ENCODE measurements at regions of chr16 and their contacts with region 1.

Region 1: DNA sequence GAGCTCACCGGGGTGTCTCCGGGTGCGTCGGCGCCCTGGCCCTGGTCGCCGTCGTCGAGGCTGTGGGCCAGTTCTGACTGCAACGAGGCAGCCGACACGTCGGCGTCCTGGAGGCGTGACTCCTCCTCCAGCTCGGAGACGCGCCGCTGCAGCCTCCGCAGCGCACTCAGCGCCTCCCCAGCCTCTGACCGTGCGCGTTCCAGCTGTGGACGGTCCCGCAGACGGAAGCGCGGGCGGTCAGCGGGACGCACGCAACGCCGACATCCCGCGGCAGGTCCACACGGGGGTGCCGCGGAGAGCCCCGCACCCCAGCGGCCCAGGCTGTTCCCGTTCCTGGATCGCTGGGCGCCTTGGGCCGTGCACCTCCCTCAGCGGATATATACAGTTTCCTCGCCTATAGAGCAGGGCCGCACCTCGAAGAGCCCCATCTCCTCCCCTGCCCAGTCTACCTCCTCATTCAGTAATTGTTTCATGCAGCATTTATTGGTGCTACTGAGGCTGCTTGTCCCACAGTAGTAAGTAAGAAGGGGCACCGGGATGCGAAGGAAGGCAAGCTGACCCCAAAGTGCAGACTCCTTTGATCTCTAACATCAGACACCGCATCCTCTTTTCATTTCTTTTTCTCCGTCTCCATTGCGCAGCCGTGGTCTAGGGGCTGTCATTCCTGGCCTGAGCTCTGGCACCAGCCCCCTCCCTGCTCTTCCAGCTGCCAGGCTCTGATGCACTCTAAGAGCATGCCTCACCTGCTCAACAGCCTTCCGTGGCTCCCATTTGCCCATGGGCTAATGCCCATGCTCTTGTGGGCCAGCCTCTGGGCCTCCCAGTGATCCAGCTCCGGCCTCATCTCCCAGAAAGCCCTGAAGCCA is 5.9 kb downstream of the THOC6 start:
- DNase-seq: peak; percentile 75
- H3K4me3 Mint-ChIP-seq: peak overlapping the region; percentile 69
- H3K27ac Mint-ChIP-seq: peak overlapping the region; percentile 67
- H3K4me1 Mint-ChIP-seq: peaks cover 46% of the 10 kb centered on the region
- H3K27me3 Mint-ChIP-seq: peaks cover 42% of the 10 kb centered on the region

Region 2: DNA sequence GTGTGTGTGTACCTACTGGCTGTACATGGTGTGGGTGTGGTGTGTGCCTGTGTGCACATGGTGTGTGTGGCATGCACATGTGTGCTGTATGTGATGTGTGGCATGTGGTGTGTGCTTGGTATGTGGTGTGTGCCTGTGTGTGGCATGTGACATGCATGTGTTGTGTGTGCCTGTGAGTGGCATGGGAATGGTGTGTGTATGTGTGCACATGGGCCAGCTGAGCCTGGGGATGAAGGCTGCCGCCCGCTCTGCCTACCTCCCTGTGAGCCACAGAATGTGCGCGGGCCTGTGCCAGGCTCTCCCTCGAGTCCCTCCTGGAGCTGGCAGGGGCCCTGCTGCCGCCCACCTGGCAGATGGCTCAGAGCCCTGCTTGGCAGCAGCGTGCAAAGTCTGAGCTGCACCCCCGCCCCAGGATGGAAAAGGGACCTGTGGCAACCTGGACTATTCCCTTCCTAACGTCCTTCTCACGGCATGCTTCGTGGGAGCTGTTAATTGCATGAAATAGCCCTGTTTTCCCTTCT is 319.0 kb before region 1 on chr16:
- CTCF ChIA-PET with region 1: no interaction called
- POLR2A ChIA-PET with region 1: no interaction called
- DNase-seq: no peak
- H3K4me3 Mint-ChIP-seq: no peak overlapping the region
- H3K27ac Mint-ChIP-seq: no peak overlapping the region
- H3K4me1 Mint-ChIP-seq: peaks cover 4% of the 10 kb centered on the region
- H3K27me3 Mint-ChIP-seq: peaks cover 5% of the 10 kb centered on the region

Region 3: DNA sequence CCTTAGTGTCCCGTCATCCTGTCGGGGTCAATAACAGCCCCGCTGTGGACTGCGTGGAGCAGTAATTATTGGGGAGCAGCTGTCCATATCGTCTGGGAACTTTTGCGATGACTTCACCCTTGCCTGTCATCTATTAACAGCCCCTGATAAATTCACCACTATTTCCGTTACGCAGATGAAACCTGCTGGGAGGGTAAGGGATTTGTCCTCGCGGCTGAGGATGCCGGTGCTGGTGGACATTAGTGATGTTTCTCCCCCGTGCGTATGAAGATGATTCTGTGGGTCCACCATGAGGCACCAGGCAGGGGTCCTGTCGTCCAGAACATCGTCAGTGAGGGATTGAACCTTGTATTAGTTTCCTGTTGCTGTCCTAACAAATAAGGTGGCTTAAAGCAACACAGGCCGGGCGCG is 145.7 kb before region 1 on chr16:
- CTCF ChIA-PET with region 1: no interaction called
- POLR2A ChIA-PET with region 1: no interaction called
- DNase-seq: no peak
- H3K4me3 Mint-ChIP-seq: peak overlapping the region; percentile 84
- H3K27ac Mint-ChIP-seq: peak overlapping the region; percentile 71
- H3K4me1 Mint-ChIP-seq: peaks cover 19% of the 10 kb centered on the region
- H3K27me3 Mint-ChIP-seq: no peaks in the 10 kb centered on the region

Region 4: GRCh38 chr16:2955779-2956578 is 73.8 kb before region 1 on chr16:
- CTCF ChIA-PET with region 1: no interaction called
- POLR2A ChIA-PET with region 1: no interaction called
- DNase-seq: no peak
- H3K4me3 Mint-ChIP-seq: no peak overlapping the region
- H3K27ac Mint-ChIP-seq: no peak overlapping the region
- H3K4me1 Mint-ChIP-seq: no peaks in the 10 kb centered on the region
- H3K27me3 Mint-ChIP-seq: peaks cover 18% of the 10 kb centered on the region

Region 5: GRCh38 chr16:3045357-3045728 is 15.6 kb after region 1 on chr16:
- CTCF ChIA-PET with region 1: interaction called, 40 read pairs
- POLR2A ChIA-PET with region 1: interaction called, 72 read pairs
- DNase-seq: peak; percentile 61
- H3K4me3 Mint-ChIP-seq: peak overlapping the region; percentile 85
- H3K27ac Mint-ChIP-seq: peak overlapping the region; percentile 78
- H3K4me1 Mint-ChIP-seq: peaks cover 51% of the 10 kb centered on the region
- H3K27me3 Mint-ChIP-seq: peaks cover 24% of the 10 kb centered on the region

Region 6: GRCh38 chr16:3051494-3051893 is 21.7 kb after region 1 on chr16:
- CTCF ChIA-PET with region 1: interaction called, 38 read pairs
- POLR2A ChIA-PET with region 1: interaction called, 72 read pairs
- DNase-seq: no peak
- H3K4me3 Mint-ChIP-seq: peak overlapping the region; percentile 57
- H3K27ac Mint-ChIP-seq: peak overlapping the region; percentile 77
- H3K4me1 Mint-ChIP-seq: peaks cover 87% of the 10 kb centered on the region
- H3K27me3 Mint-ChIP-seq: peaks cover 2% of the 10 kb centered on the region

Region 7: DNA sequence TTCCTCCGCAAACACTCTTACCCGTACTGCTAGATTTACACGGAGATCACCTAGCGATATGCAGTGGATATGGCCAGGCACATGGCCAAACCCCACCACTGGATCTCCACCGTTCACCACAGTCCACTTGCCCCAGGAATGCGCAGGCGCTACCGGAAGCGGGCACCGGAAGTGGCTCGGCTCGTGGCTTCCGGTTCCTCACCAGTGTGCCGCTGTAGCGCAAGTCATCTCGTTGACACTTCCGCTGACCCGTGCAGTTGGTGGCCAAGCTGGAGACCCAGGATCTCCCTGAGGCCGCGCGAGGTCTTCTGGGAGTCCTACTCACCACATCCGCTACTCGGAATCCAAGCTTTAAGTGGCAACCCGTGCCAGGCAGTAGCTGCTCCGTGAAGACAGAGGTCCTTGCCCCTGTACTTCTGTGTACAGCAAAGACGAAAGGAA is 402.0 kb after region 1 on chr16:
- CTCF ChIA-PET with region 1: no interaction called
- POLR2A ChIA-PET with region 1: no interaction called
- DNase-seq: peak; percentile 63
- H3K4me3 Mint-ChIP-seq: peak overlapping the region; percentile 7
- H3K27ac Mint-ChIP-seq: peak overlapping the region; percentile 69
- H3K4me1 Mint-ChIP-seq: peaks cover 20% of the 10 kb centered on the region
- H3K27me3 Mint-ChIP-seq: peaks cover 3% of the 10 kb centered on the region

Measured in activated CD4-positive, alpha-beta memory T cell treated with anti-CD3 and anti-CD28 coated beads, Interleukin-2, amount 10 ng/mL, durations not matched to agents 7 days and 5 days (primary cell).